ENCODE measurements at regions of chr12 and their contacts with region 1.

Region 1: GRCh38 chr12:78888568-78888967 is 24.0 kb downstream of the SYT1 start:
- DNase-seq: peak; percentile 74
- ATAC-seq: peak; percentile 68
- H3K4me3 ChIP-seq: peak overlapping the region in 1 of 2 experiments; percentile 26; a peak in 2 of 4 replicates
- H3K27ac ChIP-seq: peak overlapping the region; percentile 77; the same call in 1 of the 2 replicates
- H3K4me1 ChIP-seq: peaks cover 46 to 63% of the 10 kb centered on the region in 2 experiments
- H3K27me3 ChIP-seq: no peaks in the 10 kb centered on the region
- CTCF ChIP-seq: no peak
- POLR2A ChIP-seq: no peak
- RAD21 ChIP-seq: no peak; the same call in 1 of the 2 replicates

Region 2: GRCh38 chr12:78802593-78802992 is 86.0 kb before region 1 on chr12:
- CTCF ChIA-PET with region 1: no interaction called
- POLR2A ChIA-PET with region 1: no interaction called
- RAD21 ChIA-PET with region 1: no interaction called
- intact Hi-C with region 1: no loop called
- DNase-seq: no peak
- ATAC-seq: no peak
- H3K4me3 ChIP-seq: no peak overlapping the region
- H3K27ac ChIP-seq: no peak overlapping the region
- H3K4me1 ChIP-seq: no peaks in the 10 kb centered on the region
- H3K27me3 ChIP-seq: no peaks in the 10 kb centered on the region
- CTCF ChIP-seq: no peak
- POLR2A ChIP-seq: no peak
- RAD21 ChIP-seq: no peak

Region 3: DNA sequence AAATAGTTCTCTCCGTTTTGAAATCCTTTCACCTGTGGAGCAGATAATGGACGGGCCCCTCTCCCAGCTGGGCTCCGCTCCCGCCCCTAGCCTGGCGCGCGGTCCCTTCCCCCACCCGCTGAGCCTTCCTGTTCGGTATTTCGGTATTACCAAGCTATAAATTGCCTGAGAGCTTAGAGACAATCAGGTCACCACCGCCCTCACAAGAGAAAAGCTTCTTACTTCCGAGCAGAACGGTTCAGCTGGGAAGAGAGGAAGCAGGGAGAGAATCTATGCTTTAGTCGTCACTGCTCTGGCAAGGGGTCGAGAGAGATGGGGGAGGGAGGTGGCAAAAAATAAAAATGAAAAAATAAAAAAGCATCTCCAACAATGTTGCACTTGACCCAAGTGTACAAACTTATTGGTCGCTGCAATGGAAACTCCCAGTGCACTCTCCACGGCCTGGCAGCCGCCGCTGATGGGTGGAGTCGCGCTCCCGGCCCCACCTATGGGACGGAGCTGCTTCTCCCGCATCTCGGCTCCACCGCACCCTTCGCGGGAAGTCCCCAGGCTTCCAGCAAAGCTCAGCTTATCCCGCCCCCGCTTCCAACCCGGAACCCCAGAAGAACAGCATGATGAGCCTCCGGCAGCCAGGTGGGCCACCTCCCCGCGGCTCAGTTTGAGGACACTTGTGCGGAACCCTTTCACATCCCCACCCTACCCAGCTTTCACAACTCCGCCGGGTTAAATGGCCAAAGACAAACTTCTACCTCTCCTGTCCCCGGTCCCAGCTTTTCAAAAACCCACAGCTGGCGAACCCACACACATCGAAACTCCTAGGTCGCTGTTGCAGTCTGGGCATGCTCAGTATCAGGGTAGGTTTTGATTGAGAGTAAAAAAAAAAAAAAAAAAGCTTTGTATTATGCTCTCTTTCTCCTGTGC is 24.8 kb before region 1 on chr12:
- CTCF ChIA-PET with region 1: no interaction called
- POLR2A ChIA-PET with region 1: interaction called, 19 read pairs
- RAD21 ChIA-PET with region 1: no interaction called
- intact Hi-C with region 1: no loop called
- DNase-seq: no peak
- ATAC-seq: peak; percentile 74
- H3K4me3 ChIP-seq: peak overlapping the region; percentile 65 to 66
- H3K27ac ChIP-seq: peak overlapping the region; percentile 84
- H3K4me1 ChIP-seq: peaks cover 4 to 18% of the 10 kb centered on the region in 2 experiments; a peak in 2 of 4 replicates
- H3K27me3 ChIP-seq: no peaks in the 10 kb centered on the region
- CTCF ChIP-seq: no peak
- POLR2A ChIP-seq: no peak
- RAD21 ChIP-seq: no peak

Region 4: DNA sequence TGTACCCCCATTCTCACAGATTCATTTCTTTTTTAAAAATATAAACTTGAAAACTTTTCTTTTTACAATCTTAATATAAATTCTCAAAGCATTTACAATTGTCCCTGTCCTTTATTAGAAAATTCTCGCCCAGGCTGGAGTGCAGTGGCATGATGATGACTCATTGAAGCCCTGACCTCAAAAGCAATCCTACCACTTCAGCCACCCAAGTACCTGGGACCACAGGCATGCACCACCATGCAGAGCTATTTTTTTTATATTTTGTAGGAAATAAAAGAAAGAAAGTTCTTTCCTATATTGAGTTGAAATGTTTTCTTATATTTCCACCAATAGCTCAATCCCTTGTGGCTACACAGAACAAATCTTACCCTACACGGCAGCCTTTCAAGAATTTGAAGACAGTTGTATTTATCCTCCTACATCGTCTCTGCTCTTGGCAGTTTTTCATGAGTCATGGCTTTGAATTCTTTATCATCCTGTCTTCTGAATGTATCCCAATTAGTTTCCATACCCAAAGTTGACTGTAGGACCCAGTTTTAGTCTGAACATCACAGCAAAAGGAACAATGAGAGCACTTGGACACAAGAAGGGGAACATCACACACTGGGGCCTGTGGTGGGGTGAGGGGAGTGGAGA is 28.4 kb after region 1 on chr12:
- CTCF ChIA-PET with region 1: no interaction called
- POLR2A ChIA-PET with region 1: interaction called, 10 read pairs
- RAD21 ChIA-PET with region 1: no interaction called
- intact Hi-C with region 1: no loop called
- DNase-seq: peak; percentile 84
- ATAC-seq: peak; percentile 88
- H3K4me3 ChIP-seq: peak overlapping the region in 1 of 2 experiments; percentile 19; a peak in 2 of 4 replicates
- H3K27ac ChIP-seq: peak overlapping the region; percentile 69
- H3K4me1 ChIP-seq: peaks cover 43 to 65% of the 10 kb centered on the region in 2 experiments
- H3K27me3 ChIP-seq: no peaks in the 10 kb centered on the region
- CTCF ChIP-seq: no peak
- POLR2A ChIP-seq: no peak
- RAD21 ChIP-seq: no peak

Region 5: GRCh38 chr12:78928200-78929074 is 39.9 kb after region 1 on chr12:
- CTCF ChIA-PET with region 1: no interaction called
- POLR2A ChIA-PET with region 1: interaction called, 6 read pairs
- RAD21 ChIA-PET with region 1: interaction called in 1 of 2 experiments, 3 read pairs
- intact Hi-C with region 1: loop called (anchors 2 kb)
- DNase-seq: peak; percentile 87
- ATAC-seq: peak; percentile 92
- H3K4me3 ChIP-seq: no peak overlapping the region
- H3K27ac ChIP-seq: peak overlapping the region; percentile 46; the same call in 1 of the 2 replicates
- H3K4me1 ChIP-seq: peaks cover 13 to 31% of the 10 kb centered on the region in 2 experiments; a peak in 3 of 4 replicates
- H3K27me3 ChIP-seq: no peaks in the 10 kb centered on the region
- CTCF ChIP-seq: no peak
- POLR2A ChIP-seq: no peak
- RAD21 ChIP-seq: no peak; the same call in 1 of the 2 replicates